Mucosa of descending colon (tissue), 3 donors: ENCODE measurements at regions of chr11 and their contacts with region 1.

Region 1: DNA sequence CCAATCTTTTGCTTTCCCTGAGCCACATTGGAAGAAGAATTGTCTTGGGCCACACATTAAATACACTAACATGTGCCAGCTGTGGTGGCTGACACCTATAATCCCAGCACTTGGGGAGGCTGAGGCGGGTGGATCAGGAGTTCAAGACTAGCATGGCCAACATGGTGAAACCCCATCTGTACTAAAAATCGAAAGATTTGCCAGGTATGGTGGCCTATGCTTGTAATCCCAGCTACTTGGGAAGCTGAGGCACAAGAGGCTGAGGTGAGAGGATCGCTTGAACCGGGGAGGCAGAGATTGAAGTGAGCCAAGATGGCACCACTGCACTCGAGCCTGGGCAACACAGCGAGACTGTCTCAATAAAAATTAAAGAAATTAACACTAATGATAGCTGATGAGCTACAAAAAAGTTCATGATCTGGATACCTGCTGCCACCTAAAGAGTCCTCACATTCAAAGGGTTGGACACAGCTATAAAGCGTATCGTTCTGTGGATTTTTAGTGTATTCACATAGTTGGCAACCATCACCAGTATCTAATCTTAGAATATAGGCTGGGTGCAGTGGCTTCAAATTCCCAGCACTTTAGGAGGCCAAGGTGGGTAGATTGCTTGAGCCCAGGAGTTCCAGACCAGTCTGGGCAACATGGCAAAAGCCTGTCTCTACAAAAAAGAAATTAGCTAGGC is 3.4 kb upstream of the LDHC start:
- DNase-seq: no peak
- ATAC-seq: peak; percentile 11
- H3K4me3 ChIP-seq: no peak overlapping the region
- H3K4me1 ChIP-seq: no peaks in the 10 kb centered on the region
- CTCF ChIP-seq: no peak

Region 2: GRCh38 chr11:18115360-18116127 is 293.2 kb before region 1 on chr11:
- intact Hi-C with region 1: no loop called
- DNase-seq: peak in 2 of 3 donors; percentile 37 to 68
- ATAC-seq: peak; percentile 94
- H3K4me3 ChIP-seq: no peak overlapping the region
- H3K4me1 ChIP-seq: no peaks in the 10 kb centered on the region
- CTCF ChIP-seq: peak; percentile 71

Region 3: DNA sequence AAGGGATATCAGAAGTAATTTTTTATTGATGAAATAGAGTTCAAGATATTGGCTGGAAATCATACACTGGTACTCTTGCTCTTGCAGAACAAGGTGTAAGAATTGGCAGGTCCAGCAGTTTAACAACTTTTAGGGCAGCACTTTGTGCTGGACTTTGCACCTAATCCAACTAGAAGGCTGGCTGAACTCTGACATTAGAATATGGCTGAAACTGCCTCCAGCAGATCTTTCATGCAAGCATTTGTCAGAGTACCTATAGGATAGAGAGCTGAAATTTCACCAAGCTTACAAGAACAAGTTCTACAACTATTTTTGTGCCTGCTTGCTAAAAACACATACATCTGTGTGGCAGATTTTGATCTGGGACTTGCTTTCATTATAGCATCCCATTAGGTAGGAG is 104.0 kb before region 1 on chr11:
- intact Hi-C with region 1: loop called in 1 of 2 experiments (anchors 10 kb)
- DNase-seq: peak in 1 of 3 donors; percentile 70
- ATAC-seq: peak; percentile 90
- H3K4me3 ChIP-seq: no peak overlapping the region
- H3K4me1 ChIP-seq: peaks cover 6% of the 10 kb centered on the region
- CTCF ChIP-seq: no peak

Region 4: GRCh38 chr11:18329196-18329870 is 79.4 kb before region 1 on chr11:
- intact Hi-C with region 1: no loop called
- DNase-seq: no peak
- ATAC-seq: no peak
- H3K4me3 ChIP-seq: no peak overlapping the region
- H3K4me1 ChIP-seq: peaks cover 9% of the 10 kb centered on the region
- CTCF ChIP-seq: no peak